OCI-LY7 (cell line): ENCODE measurements at regions of chr2 and their contacts with region 1.

Region 1: GRCh38 chr2:179422037-179422643 is 157.5 kb upstream of the SESTD1 start:
- DNase-seq: peak; percentile 70
- H3K4me3 ChIP-seq: no peak overlapping the region
- H3K27ac ChIP-seq: no peak overlapping the region
- H3K4me1 ChIP-seq: no peaks in the 10 kb centered on the region
- CTCF ChIP-seq: peak; percentile 84

Region 2: DNA sequence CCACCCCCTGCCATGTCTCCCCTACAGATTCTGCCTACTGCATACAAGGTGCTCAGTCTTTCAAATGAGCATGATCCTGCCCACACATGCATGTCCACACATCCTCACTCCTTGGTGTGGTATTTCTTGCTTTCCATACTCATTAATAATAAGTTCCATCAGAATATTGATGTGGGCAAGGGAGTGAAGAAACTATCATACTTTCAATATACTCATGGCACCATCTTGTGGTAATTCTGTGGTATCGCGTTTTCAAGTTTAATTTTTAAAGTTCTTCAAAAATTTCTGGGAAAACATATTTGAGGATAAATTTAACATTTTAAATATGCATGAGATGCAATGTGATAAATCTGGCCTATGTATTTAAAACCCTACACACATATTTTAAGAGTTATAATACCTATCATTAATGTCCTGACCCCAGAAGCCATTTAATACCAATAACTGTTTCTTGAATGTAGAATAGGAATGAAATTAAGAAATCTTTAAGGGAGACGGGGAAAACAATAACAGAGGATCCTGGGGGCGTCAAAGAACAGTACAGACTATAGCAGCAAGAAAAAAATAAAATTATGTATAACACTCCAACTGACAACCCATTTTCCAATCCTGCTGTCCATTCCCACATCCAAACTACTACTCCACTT is 329.1 kb after region 1 on chr2:
- CTCF ChIA-PET with region 1: no interaction called
- POLR2A ChIA-PET with region 1: no interaction called
- intact Hi-C with region 1: loop called (anchors 5 kb)
- DNase-seq: peak; percentile 31
- H3K4me3 ChIP-seq: no peak overlapping the region
- H3K27ac ChIP-seq: no peak overlapping the region
- H3K4me1 ChIP-seq: no peaks in the 10 kb centered on the region
- CTCF ChIP-seq: peak; percentile 88

Region 3: GRCh38 chr2:180077295-180077906 is 655.3 kb after region 1 on chr2:
- CTCF ChIA-PET with region 1: no interaction called
- POLR2A ChIA-PET with region 1: no interaction called
- intact Hi-C with region 1: loop called (anchors 1 kb)
- DNase-seq: peak; percentile 17
- H3K4me3 ChIP-seq: no peak overlapping the region
- H3K27ac ChIP-seq: no peak overlapping the region
- H3K4me1 ChIP-seq: no peaks in the 10 kb centered on the region
- CTCF ChIP-seq: peak; percentile 87